Ovary (tissue), 10 donors: ENCODE measurements at regions of chr2 and their contacts with region 1.

Region 1: DNA sequence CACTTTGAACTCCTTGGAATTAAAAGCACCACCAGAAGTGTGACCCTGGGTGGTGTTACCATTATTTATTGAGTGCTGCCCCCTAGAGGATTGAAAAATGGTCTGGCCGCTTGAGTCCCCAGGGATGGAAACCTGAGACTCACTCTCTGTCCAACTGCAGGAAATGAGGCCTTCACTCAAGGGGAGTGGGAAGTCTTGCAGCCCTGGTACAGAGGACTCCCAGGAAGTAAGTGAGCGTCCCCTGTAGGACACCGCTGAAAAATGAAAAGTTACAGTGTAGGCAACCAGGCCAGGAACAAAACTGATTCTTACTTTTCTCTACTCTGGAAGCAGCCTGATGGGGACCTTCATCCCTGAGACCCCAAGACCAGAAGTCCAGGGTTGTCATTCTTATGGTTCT is 2.2 kb upstream of the NRP2 start:
- DNase-seq: peak in 2 of 5 donors; percentile 51 to 69
- H3K4me3 ChIP-seq: no peak overlapping the region
- H3K27ac ChIP-seq: no peak overlapping the region
- H3K4me1 ChIP-seq: peaks cover 4% of the 10 kb centered on the region
- H3K27me3 ChIP-seq: no peaks in the 10 kb centered on the region
- CTCF ChIP-seq: peak; percentile 39 to 47 (median 40)
- EP300 ChIP-seq: no peak
- POLR2A ChIP-seq: no peak

Region 2: DNA sequence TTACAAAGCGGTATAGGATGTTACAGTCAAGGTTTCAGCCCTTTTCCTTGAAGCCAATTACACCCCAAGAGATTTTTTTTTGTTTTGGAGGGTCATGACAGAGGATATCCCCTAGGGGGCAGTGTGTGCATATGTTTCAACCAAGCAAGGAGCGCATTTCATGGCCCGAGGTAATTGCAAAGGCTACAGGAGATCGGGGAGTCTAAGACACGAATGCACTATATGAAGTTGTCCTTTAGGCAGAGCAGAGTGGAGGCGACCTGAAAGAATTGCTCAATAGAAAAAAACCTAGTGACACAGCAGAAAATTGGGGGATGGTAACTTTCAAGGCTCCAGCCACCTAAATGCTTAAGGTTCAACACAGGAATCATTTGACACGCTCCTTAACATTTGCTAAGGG is 1354.6 kb before region 1 on chr2:
- intact Hi-C with region 1: loop called in 3 of 4 experiments (anchors 5 to 10 kb)
- DNase-seq: peak in 4 of 5 donors; percentile 52 to 72 (median 58)
- H3K4me3 ChIP-seq: no peak overlapping the region
- H3K27ac ChIP-seq: no peak overlapping the region
- H3K4me1 ChIP-seq: no peaks in the 10 kb centered on the region
- H3K27me3 ChIP-seq: no peaks in the 10 kb centered on the region
- CTCF ChIP-seq: peak; percentile 65 to 83 (median 73)
- EP300 ChIP-seq: no peak
- POLR2A ChIP-seq: no peak

Region 3: GRCh38 chr2:204691911-204692510 is 988.1 kb before region 1 on chr2:
- intact Hi-C with region 1: loop called in 1 of 4 experiments (anchors 10 kb)
- DNase-seq: peak in 4 of 5 donors; percentile 31 to 81 (median 61)
- H3K4me3 ChIP-seq: no peak overlapping the region
- H3K27ac ChIP-seq: no peak overlapping the region
- H3K4me1 ChIP-seq: no peaks in the 10 kb centered on the region
- H3K27me3 ChIP-seq: no peaks in the 10 kb centered on the region
- CTCF ChIP-seq: peak; percentile 55 to 74 (median 72)
- EP300 ChIP-seq: no peak
- POLR2A ChIP-seq: no peak

Region 4: GRCh38 chr2:205734436-205735037 is 54.5 kb after region 1 on chr2:
- intact Hi-C with region 1: loop called in 2 of 4 experiments (anchors 10 kb)
- DNase-seq: peak; percentile 64 to 75 (median 66)
- H3K4me3 ChIP-seq: no peak overlapping the region
- H3K27ac ChIP-seq: peak overlapping the region in 1 of 2 donors; percentile 71
- H3K4me1 ChIP-seq: peaks cover 26% of the 10 kb centered on the region
- H3K27me3 ChIP-seq: no peaks in the 10 kb centered on the region
- CTCF ChIP-seq: no peak
- EP300 ChIP-seq: no peak
- POLR2A ChIP-seq: no peak

Region 5: DNA sequence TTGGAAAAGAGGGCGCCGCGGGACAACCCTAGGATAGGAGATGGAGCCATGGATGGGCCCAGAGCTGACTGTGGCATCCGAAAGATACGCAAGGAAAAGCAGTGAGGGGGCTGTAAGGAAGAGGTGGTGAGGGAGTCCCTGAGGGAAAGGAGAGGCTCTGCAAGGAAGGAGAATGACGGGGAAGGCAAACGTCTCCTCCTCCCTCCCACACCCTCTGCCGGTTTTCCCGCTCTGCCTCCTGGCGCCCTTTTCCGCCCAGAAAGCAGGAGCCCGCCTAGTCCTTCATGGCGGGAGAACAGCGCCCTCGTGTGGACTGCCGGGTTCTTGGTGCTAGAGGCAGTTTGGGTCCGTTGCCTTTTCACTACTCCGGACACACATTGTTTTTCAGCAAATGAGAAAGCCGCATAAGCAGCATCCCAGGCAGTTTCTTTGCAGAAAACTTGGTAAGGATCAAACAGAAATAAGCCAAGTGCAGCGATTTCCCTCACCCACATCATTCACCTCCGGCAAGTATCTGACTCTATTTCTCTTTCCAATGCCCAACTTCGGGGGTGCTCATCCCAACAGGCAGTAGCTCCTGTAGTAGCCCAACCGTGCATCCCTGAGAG is 205.5 kb after region 1 on chr2:
- intact Hi-C with region 1: loop called in 2 of 4 experiments (anchors 5 kb)
- DNase-seq: peak; percentile 89 to 95 (median 92)
- H3K4me3 ChIP-seq: no peak overlapping the region
- H3K27ac ChIP-seq: no peak overlapping the region
- H3K4me1 ChIP-seq: no peaks in the 10 kb centered on the region
- H3K27me3 ChIP-seq: no peaks in the 10 kb centered on the region
- CTCF ChIP-seq: peak; percentile 83 to 86 (median 85)
- EP300 ChIP-seq: no peak
- POLR2A ChIP-seq: no peak